ENCODE measurements at regions of chr10 and their contacts with region 1.

Region 1: DNA sequence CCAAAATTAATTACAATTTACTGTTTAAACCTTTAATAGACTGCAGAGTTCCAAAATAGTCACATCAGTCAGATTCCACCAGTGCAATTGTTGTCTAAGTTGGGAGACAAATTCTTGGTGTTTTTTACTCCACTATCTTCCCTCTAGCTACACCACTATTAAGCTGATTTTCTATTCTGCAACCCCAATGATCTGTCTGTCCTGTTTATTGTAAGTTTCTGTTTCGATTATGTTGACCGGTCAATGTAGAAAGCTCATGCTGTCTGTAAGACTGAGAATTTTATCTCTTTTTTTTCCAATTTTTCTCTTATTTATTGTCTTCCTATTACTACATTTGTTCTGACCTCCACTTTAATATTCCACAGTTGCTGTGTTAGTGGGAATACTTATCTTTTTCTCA is 557.5 kb downstream of the SH2D4B start:
- DNase-seq: no peak
- CTCF ChIP-seq: no peak

Region 2: GRCh38 chr10:81081887-81082620 is 13.2 kb before region 1 on chr10:
- CTCF ChIA-PET with region 1: interaction called, 12 read pairs
- POLR2A ChIA-PET with region 1: no interaction called
- DNase-seq: peak; percentile 16
- CTCF ChIP-seq: peak; percentile 32

Region 3: DNA sequence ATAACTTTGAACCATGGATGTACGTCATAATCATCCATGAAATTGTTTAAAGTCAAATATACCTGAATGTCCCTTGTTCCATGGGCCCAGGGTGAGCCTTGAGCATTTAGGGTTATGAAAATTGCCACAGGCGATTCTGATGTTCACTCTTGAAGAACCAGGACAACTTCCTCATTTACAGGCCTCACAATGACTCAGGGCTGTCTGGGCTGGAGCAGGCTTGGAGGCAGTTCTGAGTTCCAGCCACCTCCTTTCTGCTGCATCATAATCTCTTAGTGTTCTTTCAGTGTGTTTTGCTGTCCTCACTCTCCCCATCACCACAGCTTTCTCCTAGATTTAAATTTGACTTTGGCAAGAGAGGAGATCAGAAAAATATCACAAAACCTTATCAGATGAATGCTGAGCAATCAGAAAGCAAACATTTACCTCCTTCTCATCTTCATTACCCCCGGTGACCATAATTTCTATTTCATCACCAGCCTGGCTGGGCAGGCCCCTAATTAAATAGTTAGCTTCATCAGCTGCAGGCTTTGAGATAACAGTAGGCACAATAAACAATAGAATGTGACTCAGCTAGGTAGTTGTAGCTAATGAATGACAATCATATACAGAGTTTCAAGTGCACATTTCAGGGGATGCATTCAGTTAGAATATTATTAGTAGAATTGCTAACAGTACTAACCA is 13.4 kb after region 1 on chr10:
- CTCF ChIA-PET with region 1: interaction called, 13 read pairs
- POLR2A ChIA-PET with region 1: no interaction called
- DNase-seq: peak; percentile 57
- CTCF ChIP-seq: no peak

Region 4: GRCh38 chr10:81152656-81153055 is 57.4 kb after region 1 on chr10:
- CTCF ChIA-PET with region 1: no interaction called
- POLR2A ChIA-PET with region 1: no interaction called
- DNase-seq: no peak
- CTCF ChIP-seq: no peak

Measured in GM10248 (cell line).